Gastrocnemius medialis (tissue), 4 donors: ENCODE measurements at regions of chrX and their contacts with region 1.

Region 1: DNA sequence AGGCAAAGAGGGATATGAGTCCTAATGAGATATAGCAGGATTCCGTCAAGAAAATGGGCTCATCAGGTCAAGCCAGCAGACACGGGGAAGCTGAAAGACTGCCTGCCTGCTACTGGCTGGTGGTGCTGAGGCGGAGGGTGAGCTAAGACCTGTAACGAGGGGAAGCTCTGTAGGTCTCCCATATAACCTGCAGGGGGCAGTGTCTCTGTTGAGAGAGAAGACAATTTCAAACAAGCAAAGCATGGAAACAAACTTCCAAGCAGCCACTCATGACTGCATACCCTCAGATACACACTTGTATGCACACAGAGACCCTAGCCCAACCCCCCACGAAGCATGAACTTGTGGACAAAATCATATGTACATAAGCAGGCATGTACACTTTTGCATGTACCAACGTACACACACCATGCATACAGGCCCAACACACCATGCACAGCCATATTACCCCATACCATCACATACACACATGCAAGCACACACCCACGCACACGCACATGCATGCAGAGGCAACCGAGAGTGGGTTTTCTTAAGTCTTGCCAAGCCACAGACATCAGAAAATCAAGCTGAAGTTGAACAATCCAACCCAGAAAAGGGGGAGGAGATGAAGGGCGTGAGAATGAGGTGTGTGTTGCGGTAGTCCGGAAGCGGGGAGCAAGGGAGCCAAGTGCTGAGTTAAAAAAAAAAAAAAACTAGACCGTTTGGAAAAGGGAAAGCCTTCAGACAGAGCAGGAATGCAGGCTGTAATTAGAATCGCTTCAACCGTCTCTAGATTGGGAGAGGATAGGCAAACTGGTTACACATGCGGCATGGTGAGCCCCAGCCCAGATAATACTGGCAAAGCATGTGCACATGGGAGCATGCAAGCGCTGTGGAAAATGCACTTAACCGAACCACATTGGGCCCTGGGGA is 71.0 kb downstream of the PJA1 start:
- DNase-seq: peak in 1 of 2 donors; percentile 28
- ATAC-seq: peak in 1 of 2 donors; percentile 39
- H3K4me3 ChIP-seq: no peak overlapping the region
- H3K27ac ChIP-seq: no peak overlapping the region
- H3K4me1 ChIP-seq: no peaks in the 10 kb centered on the region
- H3K27me3 ChIP-seq: no peaks in the 10 kb centered on the region
- CTCF ChIP-seq: peak in 4 of 5 experiments; percentile 10 to 56 (median 40)
- POLR2A ChIP-seq: no peak

Region 2: DNA sequence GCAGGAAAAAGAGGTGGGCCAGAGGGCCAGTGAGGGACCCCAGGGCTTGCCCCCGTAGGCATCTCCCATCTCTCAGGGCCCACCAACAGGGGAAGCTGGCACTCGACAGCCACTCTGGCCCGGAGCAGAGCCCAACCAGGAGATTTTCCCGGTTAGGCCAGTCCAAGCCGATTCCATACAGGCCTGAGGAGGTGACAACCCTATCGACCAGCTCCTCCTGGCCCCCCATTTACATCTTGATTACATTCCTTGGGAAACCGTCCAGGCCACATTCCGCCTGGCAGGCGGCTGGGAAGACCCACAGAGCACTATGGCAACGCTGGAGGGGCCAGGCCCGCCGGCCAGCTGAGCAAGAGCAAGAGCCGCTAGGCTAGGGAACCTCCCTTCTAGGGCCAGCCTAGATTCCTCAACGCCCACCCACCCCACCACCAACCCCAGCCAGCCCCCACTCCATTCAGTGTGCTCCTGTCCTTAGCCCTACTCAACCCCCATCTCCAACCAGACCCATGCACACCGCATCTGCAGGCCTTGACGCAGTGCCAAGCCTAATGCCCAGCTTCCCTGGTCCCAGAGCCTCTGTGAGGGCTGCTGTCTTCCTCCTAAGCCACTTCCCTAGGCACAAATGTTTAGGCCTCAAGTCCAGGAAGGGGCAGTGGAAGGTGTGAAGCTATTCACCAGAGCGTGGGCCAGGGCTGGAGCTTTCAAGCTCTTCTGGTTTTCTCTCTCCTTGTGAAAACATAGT is 104.2 kb before region 1 on chrX:
- in situ Hi-C with region 1: loop called in 1 of 4 experiments (anchors 25 kb)
- intact Hi-C with region 1: no loop called
- DNase-seq: no peak
- ATAC-seq: peak in 1 of 2 donors; percentile 30
- H3K4me3 ChIP-seq: no peak overlapping the region
- H3K27ac ChIP-seq: no peak overlapping the region
- H3K4me1 ChIP-seq: no peaks in the 10 kb centered on the region
- H3K27me3 ChIP-seq: no peaks in the 10 kb centered on the region
- CTCF ChIP-seq: no peak
- POLR2A ChIP-seq: no peak

Region 3: DNA sequence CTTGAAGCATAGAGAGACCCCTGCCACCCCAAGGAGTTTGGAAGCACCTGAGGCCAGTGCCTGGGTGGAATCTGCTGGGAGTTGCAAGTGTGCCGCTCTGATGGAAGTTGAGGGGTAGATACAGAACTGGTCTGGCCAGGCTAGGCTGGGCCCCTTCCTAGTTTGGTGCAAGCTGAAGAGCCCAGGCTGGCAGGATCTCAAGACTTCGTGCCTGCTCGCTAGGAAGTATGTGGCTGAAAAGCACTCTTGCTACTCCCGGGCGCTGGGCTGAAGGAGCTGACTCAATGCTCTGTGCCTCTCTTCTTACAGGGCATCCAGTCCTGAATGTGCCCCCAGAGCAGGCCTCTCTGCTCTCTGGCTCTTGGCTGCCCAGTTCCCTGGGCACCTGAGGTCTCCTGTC is 122.7 kb after region 1 on chrX:
- in situ Hi-C with region 1: loop called in 1 of 4 experiments (anchors 10 kb)
- intact Hi-C with region 1: loop called (anchors 1 kb)
- DNase-seq: no peak
- ATAC-seq: no peak
- H3K4me3 ChIP-seq: no peak overlapping the region
- H3K27ac ChIP-seq: no peak overlapping the region
- H3K4me1 ChIP-seq: no peaks in the 10 kb centered on the region
- H3K27me3 ChIP-seq: peaks cover 0 to under 1% (median 0%) of the 10 kb centered on the region in 3 donors
- CTCF ChIP-seq: no peak
- POLR2A ChIP-seq: no peak

Region 4: DNA sequence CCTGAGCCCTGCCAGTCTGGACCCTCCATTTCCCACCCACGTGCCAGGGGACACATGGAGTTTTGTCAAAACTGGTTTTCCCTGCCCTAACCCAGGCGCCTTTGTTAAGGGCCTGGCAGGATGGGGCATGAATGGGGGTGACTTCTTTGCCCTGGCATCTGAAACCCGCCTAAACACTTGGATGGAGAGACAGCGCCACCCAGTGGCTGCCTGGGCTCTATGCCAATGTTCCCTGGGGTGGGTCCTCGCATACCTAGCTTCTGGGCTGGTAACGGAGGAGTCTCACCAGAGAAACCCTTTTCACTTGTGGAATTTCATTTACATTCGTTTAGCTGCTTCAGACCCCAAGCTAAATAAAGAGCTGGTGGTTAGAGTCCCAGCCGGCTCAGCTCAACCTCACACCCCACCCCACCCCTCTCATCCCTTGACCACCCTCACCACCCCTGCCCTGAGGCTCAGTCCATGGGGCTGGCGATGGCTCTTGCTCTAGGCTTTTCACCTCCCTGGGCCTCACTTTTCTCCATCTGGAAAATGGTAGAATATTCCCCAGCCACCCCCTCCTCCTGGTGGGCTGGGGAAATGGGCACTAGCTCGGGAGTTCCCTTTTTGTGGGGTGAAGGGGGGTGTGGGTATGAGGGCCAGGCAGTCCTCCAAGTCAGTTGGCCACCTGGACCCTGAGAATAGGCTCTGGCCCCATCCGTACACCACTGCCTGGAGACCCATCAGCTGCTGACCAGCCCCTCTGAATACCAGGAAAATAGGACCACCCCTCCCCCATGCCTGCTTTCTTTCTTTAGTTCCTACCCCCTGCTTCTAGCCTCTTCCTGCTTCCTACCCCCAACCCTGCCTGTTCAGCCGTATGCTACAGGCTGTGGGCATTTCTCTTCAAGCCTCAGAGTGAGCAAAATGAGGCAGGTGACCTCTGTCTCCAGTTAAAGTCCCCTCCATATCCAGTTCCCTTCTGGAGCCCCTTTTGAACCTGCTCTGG is 128.2 kb after region 1 on chrX:
- in situ Hi-C with region 1: loop called in 1 of 4 experiments (anchors 10 kb)
- intact Hi-C with region 1: loop called (anchors 1 kb)
- DNase-seq: peak; percentile 5 to 37
- ATAC-seq: peak; percentile 39 to 55
- H3K4me3 ChIP-seq: no peak overlapping the region
- H3K27ac ChIP-seq: no peak overlapping the region
- H3K4me1 ChIP-seq: no peaks in the 10 kb centered on the region
- H3K27me3 ChIP-seq: peaks cover 0 to 3% (median 0%) of the 10 kb centered on the region in 3 donors
- CTCF ChIP-seq: peak; percentile 51 to 76 (median 71)
- POLR2A ChIP-seq: no peak

Region 5: DNA sequence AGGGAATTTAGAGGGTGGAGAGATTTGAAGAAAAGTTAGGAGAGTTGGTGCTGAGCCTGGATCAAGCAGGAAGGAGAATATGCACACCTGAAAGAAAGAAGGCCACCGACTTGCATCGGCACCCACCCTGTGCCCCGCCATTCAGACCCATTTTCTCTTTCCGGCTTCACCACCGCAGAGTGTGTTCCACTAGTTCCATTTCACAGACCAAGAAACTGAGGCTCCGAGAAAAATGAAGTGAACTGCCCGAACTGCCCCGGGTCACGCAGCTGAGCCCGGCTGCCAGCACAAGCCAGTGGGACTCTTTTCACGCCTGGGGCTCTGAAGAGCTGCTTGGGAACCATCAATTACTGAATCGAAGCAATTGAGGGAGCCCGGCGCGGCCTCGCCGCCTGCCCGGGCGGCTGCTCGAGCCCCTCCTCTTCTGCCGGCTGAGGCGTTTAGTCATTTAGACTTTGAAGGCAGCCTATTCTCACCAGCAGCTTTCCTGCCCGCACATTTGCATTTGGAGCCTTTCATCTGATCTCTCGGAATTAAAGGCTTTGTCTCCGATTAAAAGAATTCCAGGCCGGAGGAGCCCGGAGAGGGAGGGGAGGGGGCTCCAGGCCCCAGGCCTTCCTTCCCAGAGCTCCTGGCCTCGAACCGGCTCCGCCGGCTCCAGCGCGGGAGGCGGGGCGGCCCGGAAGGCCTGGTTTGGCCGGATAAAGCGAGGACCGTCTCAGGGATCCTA is 211.3 kb after region 1 on chrX:
- in situ Hi-C with region 1: no loop called
- intact Hi-C with region 1: no loop called
- DNase-seq: no peak
- ATAC-seq: no peak
- H3K4me3 ChIP-seq: no peak overlapping the region
- H3K27ac ChIP-seq: no peak overlapping the region
- H3K4me1 ChIP-seq: no peaks in the 10 kb centered on the region
- H3K27me3 ChIP-seq: peaks cover 0 to 13% (median 7%) of the 10 kb centered on the region in 3 donors
- CTCF ChIP-seq: no peak
- POLR2A ChIP-seq: no peak